A673 (cell line): ENCODE measurements at regions of chr3 and their contacts with region 1.

Region 1: DNA sequence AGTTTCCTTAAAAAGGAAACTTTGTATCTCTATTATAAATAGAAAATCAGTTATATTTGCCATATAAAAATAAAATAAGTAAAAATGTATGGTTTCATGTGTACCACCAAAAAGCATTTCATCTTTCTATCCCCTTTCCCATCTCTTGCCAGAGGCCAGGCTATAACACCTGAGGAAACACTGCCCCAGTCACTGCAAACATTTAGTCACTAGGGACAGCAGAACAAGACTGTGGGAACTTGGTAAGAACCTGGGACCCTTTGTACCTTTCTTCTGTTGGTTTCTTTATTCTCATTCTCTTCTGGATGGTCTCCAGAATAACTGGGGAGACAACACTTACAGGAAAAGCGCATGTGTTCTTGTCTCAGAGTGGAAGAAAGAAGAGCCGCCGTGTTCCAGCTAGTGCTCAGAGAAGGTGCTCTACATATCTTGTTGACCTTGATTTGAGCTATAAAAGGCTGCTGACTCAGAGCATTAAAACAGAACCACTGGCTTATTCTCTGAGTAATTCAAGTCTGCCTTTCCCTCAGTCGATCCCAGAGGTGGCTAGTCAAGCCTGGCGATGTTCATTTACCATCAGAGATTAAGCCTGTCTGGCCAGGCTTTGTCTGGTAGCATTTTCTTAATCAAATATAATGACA is 361.6 kb downstream of the RBMS3 start:
- DNase-seq: no peak
- H3K4me3 ChIP-seq: no peak overlapping the region
- H3K27ac ChIP-seq: no peak overlapping the region
- H3K4me1 ChIP-seq: peaks cover 37% of the 10 kb centered on the region
- H3K27me3 ChIP-seq: peaks cover 20% of the 10 kb centered on the region
- CTCF ChIP-seq: no peak

Region 2: DNA sequence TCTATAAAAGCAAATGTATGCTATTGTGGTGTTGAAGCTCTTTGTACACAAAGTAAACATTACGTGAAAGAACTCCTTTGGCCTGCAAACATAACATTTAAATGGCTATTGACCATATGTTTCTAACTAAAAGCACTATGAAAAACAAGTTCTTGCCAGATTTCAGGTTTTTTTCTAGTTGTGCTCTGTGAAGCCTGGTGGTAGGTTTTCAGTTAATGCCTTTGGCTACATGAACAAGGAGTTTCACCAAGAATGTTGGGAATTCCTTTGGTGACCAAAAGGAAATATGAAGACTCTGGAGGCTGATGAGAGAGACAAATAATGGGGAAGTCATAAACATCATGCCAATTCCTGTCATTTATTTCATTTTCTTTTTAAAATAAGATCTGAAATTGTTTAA is 295.7 kb before region 1 on chr3:
- CTCF ChIA-PET with region 1: no interaction called
- POLR2A ChIA-PET with region 1: no interaction called
- intact Hi-C with region 1: loop called (anchors 2 kb)
- DNase-seq: peak; percentile 50
- H3K4me3 ChIP-seq: no peak overlapping the region
- H3K27ac ChIP-seq: no peak overlapping the region
- H3K4me1 ChIP-seq: peaks cover 32% of the 10 kb centered on the region
- H3K27me3 ChIP-seq: peaks cover 20% of the 10 kb centered on the region
- CTCF ChIP-seq: no peak

Region 3: GRCh38 chr3:29555590-29555989 is 86.9 kb before region 1 on chr3:
- CTCF ChIA-PET with region 1: no interaction called
- POLR2A ChIA-PET with region 1: no interaction called
- intact Hi-C with region 1: loop called (anchors 5 kb)
- DNase-seq: no peak
- H3K4me3 ChIP-seq: no peak overlapping the region
- H3K27ac ChIP-seq: no peak overlapping the region
- H3K4me1 ChIP-seq: peaks cover 33% of the 10 kb centered on the region
- H3K27me3 ChIP-seq: no peaks in the 10 kb centered on the region
- CTCF ChIP-seq: no peak

Region 4: DNA sequence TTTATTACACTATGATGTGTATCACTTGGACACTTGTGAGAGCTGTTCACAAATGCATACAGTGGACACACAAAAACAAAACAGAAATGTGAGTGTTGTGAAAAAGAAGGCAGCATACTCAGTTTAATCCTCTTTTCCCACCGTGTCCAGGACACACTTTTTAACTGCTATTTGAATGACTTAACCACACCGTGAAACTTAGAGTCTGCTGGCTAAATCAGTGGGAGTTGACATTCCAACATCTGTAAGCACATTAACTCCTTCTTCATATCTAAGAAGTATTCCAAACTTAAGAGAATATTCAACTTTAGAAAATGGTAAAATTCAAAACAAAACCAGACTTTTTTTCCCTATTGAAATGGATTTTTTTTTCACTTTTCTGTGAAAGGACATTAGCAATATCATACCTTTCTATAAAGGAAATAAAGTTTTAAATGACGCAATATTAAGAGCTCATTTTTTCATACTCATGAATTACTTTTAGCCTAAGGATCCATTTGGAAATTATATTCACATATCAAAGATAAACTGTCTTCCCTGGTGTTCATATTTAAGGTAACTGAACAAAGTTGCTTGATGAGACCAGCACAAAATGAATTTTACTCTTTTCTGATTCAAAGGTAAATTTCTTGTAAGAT is 45.0 kb before region 1 on chr3:
- CTCF ChIA-PET with region 1: no interaction called
- POLR2A ChIA-PET with region 1: no interaction called
- intact Hi-C with region 1: no loop called
- DNase-seq: peak; percentile 46
- H3K4me3 ChIP-seq: no peak overlapping the region
- H3K27ac ChIP-seq: no peak overlapping the region
- H3K4me1 ChIP-seq: peaks cover 35% of the 10 kb centered on the region
- H3K27me3 ChIP-seq: no peaks in the 10 kb centered on the region
- CTCF ChIP-seq: no peak

Region 5: GRCh38 chr3:29759411-29760225 is 117.1 kb after region 1 on chr3:
- CTCF ChIA-PET with region 1: no interaction called
- POLR2A ChIA-PET with region 1: no interaction called
- intact Hi-C with region 1: loop called (anchors 1 kb)
- DNase-seq: peak; percentile 78
- H3K4me3 ChIP-seq: peak overlapping the region; percentile 23
- H3K27ac ChIP-seq: peak overlapping the region; percentile 77
- H3K4me1 ChIP-seq: peaks cover 67% of the 10 kb centered on the region
- H3K27me3 ChIP-seq: no peaks in the 10 kb centered on the region
- CTCF ChIP-seq: no peak